BJ (cell line): ENCODE measurements at regions of chr12 and their contacts with region 1.

Region 1: DNA sequence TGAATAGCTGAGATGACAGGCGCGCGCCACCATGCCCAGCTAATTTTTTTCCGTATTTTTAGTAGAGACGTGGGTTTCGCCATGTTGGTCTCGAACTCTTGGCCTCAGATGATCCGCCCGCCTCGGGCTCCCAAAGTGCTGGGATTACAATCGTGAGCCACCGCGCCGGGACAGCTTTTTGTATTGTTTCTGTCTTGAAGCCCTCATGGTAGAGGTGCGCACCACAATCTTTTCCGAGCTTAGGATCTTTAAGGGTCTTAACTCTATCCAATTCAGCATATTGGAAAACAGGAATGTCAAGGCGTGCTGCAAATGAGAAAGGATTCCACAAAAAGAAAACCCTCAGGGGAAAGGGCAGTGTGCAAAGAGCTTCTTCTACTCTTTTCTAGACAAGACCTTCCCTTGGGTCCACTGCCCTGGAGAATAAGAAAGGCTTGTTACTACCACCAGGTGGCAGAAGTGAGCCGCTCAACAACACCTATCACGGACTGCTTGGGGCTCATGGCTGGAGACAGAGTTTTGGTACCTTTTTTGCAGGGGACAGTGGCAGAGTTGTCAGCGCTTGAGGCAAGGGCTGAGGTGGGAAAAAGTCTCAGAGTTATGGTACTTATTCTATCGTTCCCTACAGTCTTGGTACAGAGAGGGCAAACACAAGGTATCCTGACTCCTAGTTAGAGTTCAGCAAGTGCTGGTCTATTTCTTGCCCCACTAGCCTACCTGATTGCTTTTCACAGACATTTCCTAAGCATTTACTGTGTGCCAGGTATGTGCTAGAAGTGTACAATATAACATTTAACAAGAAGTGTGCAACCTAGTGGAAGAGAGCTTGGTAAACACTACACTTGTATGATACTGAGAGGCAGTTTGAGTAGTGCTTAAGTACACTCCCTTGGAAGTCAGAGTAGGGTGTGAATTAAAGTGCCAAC is 16.4 kb upstream of the SP7 start:
- DNase-seq: no peak
- H3K4me3 ChIP-seq: no peak overlapping the region
- H3K27me3 ChIP-seq: no peaks in the 10 kb centered on the region
- CTCF ChIP-seq: peak; percentile 83

Region 2: GRCh38 chr12:53231826-53232645 is 120.6 kb before region 1 on chr12 and contains the start of gene RARG:
- CTCF ChIA-PET with region 1: no interaction called
- POLR2A ChIA-PET with region 1: no interaction called
- DNase-seq: no peak
- H3K4me3 ChIP-seq: peak within 1 kb of the TSS; percentile 67
- H3K27me3 ChIP-seq: no peaks in the 10 kb centered on the region
- CTCF ChIP-seq: no peak
- polyA plus RNA-seq, gene RARG: 41.7 and 63.9 TPM in 2 replicates

Region 3: DNA sequence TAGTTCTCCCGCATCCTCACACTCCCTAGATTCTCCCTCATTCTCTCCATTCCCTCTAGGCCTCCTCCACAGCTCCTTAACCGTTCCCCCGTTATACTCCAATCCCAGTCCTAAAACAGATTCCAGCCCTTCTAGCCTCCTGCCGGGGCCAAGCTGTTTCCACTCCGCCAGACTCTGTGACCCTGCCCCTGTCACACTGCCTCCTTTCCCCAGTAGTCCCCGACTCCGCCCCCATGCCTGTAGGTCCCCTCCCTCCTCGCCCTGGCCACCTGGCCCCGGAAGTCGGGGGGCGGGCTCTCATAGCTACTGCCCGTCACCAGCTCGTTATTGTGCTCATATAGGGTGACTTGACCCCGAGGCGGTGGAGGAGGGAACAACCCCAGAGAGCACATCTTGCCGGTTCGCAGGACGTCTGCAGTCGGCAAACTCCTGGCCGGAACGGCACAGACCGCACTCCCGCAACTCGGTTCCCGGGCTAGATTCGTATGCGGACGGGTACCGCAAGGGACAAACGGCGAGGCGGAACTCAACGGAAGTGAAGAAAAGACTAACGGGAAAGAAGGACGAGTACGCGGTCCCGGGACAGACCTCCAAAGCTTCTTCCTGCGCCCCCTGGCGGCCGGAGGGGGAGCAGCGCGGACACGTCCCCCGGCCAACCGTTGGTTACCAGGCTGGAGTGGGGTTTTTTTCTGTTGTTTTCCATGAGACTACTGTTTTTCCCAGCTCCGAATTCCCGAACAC is 31.4 kb before region 1 on chr12 and contains the start of gene AAAS:
- CTCF ChIA-PET with region 1: interaction called, 210 read pairs
- POLR2A ChIA-PET with region 1: interaction called, 3 read pairs
- DNase-seq: peak; percentile 71
- H3K4me3 ChIP-seq: peak within 1 kb of the TSS; percentile 88
- H3K27me3 ChIP-seq: no peaks in the 10 kb centered on the region
- CTCF ChIP-seq: peak; percentile 100
- polyA plus RNA-seq, gene AAAS: 53.3 and 84.3 TPM in 2 replicates

Region 4: GRCh38 chr12:53336181-53336681 is 16.4 kb before region 1 on chr12 and contains the start of gene SP7:
- CTCF ChIA-PET with region 1: interaction called, 210 read pairs
- POLR2A ChIA-PET with region 1: interaction called, 3 read pairs
- DNase-seq: no peak
- H3K4me3 ChIP-seq: no peak within 1 kb of the TSS
- H3K27me3 ChIP-seq: peaks cover 41% of the 10 kb centered on the region
- CTCF ChIP-seq: no peak
- polyA plus RNA-seq, gene SP7: not detected in 2 replicates

Region 5: DNA sequence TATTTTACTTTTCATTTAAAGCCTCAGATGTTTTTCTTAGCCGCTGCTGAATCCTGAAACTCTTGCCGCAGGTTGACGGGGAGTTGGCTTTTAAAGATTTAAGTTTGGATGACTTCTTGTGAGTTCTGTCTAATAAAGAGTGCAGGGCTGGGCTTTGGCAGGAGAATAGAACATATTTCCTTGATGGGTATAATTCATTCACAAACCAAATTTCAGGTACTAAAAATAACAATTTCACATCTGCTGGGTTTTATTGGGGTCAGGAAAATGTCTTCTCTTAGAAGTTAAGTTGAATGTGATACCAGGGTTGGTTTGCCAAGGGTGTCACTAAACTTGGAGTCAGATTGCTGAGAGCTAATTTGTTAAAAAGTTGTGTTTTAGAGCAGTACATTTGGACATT is 37.1 kb after region 1 on chr12:
- CTCF ChIA-PET with region 1: interaction called, 10 read pairs
- POLR2A ChIA-PET with region 1: no interaction called
- DNase-seq: no peak
- H3K4me3 ChIP-seq: no peak overlapping the region
- H3K27me3 ChIP-seq: no peaks in the 10 kb centered on the region
- CTCF ChIP-seq: no peak

Region 6: DNA sequence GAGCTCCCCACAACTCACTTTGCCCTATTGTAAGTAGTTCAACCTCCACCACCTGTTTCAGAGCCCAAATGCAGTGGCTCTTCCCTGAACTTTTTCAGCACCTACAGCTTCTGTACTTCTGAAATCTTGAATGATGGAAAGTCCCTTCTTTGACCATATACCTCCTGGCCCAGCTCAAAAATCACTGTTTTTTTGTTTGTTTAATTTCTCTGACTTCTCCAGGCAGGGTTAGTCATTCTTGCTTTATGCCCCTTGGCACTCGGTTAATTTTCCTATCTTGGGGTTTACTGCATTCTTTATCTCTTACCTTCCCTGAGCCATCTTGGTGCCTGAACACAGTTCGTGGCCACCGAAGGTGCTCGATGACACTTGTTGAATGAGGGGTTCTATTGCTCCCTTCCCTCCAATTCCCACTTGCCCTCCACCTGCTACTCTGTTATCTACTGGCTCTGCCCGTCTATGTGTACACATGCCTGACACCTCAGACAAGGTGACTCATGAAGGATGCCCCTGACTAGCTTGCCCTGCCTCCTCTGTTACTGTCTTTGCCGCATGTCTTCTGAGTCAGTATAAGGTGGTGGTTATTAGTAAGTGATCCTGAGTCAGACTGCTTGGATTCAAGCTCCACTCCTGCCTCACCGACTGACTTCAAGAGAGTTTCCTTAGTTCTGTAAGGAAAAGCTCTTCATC is 75.5 kb after region 1 on chr12:
- CTCF ChIA-PET with region 1: interaction called, 163 read pairs
- POLR2A ChIA-PET with region 1: no interaction called
- DNase-seq: peak; percentile 76
- H3K4me3 ChIP-seq: no peak overlapping the region
- H3K27me3 ChIP-seq: no peaks in the 10 kb centered on the region
- CTCF ChIP-seq: no peak

Region 7: DNA sequence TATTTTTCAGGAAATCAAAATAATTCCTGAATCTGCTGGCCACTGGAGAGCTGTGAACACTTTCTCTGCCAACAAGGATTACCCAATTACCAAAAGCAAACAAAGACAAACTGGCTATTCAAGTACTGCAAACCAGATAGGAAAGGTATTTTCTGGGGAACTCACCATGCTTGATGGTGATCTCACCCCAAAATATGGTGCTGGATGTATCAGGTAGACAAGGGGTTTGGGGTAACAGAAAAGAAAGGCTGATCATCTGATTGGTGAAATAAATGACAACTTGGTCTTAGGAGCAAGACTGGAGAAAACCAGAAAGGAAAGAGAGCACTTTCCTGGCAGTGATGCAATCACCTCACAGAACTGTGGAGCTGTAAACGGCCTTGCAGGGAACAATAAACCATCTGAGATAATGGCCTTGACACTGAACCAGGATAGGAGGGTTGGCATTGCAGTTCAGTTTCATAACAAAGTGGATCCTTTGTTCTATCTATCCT is 185.6 kb after region 1 on chr12:
- CTCF ChIA-PET with region 1: no interaction called
- POLR2A ChIA-PET with region 1: no interaction called
- DNase-seq: peak; percentile 46
- H3K4me3 ChIP-seq: no peak overlapping the region
- H3K27me3 ChIP-seq: no peaks in the 10 kb centered on the region
- CTCF ChIP-seq: no peak